GM12878 (cell line): ENCODE measurements at regions of chr2 and their contacts with region 1.

Region 1: DNA sequence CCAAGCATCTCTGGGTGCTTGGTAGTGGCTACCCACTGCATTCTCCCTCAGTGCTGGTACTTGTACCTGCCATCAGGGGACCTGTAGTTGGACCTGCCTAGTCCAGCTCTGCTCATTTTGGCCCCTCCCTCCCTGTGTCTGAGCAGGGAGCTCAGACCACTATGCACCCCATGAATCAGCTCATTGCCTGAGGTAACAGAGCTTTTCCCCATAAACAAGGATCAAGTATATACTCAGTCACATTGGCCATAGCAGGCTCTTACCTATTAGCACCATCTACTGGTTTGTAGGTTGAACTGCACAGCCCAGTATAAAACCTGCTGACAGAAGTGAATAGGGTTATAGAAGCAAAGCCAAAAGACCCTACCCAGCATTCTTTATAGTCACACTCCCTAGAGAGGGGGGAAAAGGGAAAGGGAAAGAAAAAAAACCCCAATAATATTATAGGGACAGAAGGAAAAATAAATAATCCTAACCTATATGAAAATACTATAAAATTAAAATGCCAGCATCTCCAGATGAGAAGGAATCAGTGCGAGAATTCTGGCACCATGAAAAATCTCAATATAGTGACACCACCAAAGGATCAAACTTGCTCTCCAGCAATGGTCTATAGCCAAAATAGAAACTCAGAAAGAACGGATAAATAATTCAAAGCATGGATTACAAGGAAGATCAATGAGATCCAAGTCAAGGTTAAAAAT is 6.9 kb upstream of the FLACC1 start:
- DNase-seq: peak; percentile 30
- ATAC-seq: peak; percentile 94
- H3K4me3 ChIP-seq: no peak overlapping the region
- H3K27ac ChIP-seq: no peak overlapping the region
- H3K4me1 ChIP-seq: no peaks in the 10 kb centered on the region
- H3K27me3 ChIP-seq: no peaks in the 10 kb centered on the region
- CTCF ChIP-seq: peak; percentile 83 to 86 (median 86)
- EP300 ChIP-seq: no peak
- POLR2A ChIP-seq: no peak
- RAD21 ChIP-seq: peak; percentile 97

Region 2: GRCh38 chr2:200985799-200986198 is 378.2 kb before region 1 on chr2:
- CTCF ChIA-PET with region 1: no interaction called
- POLR2A ChIA-PET with region 1: no interaction called
- RAD21 ChIA-PET with region 1: no interaction called
- SMC1A ChIA-PET with region 1: no interaction called
- in situ Hi-C with region 1: no loop called
- intact Hi-C with region 1: no loop called
- DNase-seq: no peak
- ATAC-seq: no peak
- H3K4me3 ChIP-seq: no peak overlapping the region
- H3K27ac ChIP-seq: no peak overlapping the region
- H3K4me1 ChIP-seq: no peaks in the 10 kb centered on the region
- H3K27me3 ChIP-seq: no peaks in the 10 kb centered on the region
- CTCF ChIP-seq: no peak
- EP300 ChIP-seq: no peak
- POLR2A ChIP-seq: no peak
- RAD21 ChIP-seq: no peak

Region 3: GRCh38 chr2:201242571-201243277 is 121.3 kb before region 1 on chr2:
- CTCF ChIA-PET with region 1: interaction called, 55 read pairs
- POLR2A ChIA-PET with region 1: no interaction called
- RAD21 ChIA-PET with region 1: interaction called, 43 read pairs
- SMC1A ChIA-PET with region 1: interaction called, 54 read pairs
- in situ Hi-C with region 1: loop called (anchors 5 kb)
- intact Hi-C with region 1: no loop called
- DNase-seq: no peak
- ATAC-seq: no peak
- H3K4me3 ChIP-seq: no peak overlapping the region
- H3K27ac ChIP-seq: no peak overlapping the region
- H3K4me1 ChIP-seq: no peaks in the 10 kb centered on the region
- H3K27me3 ChIP-seq: no peaks in the 10 kb centered on the region
- CTCF ChIP-seq: no peak
- EP300 ChIP-seq: no peak
- POLR2A ChIP-seq: no peak
- RAD21 ChIP-seq: no peak

Region 4: DNA sequence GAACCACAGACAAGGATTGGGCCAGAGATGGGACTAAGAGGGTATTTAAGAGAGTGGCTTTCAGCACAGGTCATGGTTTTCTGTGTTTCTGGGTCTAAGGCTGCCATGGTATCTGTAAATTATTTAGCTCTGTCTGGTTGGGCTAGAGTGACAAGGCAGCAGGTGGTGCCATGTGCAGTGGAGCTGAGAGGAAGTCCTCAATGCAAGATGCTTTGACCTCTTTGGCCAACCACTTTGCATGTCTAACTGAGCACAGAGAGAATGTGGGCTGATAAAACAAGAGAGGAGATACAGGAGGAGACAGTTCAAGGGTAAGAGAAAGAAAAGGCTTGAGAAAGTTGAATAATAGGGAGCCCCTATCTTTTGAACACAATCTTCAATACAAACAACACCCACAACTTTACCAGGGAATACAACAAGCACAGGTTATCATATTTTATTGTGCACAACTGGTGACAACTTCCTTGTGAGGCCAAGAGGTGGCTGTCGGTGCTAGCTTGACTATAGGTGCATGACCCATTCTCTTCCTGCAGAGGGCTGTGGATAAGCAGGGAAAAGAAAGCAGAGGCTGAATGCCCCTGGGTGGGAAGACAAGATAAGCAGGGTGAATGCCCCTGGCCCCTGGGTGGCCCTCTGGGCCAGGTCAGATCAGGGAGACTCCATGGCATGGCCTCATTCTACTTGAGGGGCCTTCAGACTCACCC is 19.2 kb before region 1 on chr2:
- CTCF ChIA-PET with region 1: interaction called, 20 read pairs
- POLR2A ChIA-PET with region 1: no interaction called
- RAD21 ChIA-PET with region 1: interaction called, 5 read pairs
- SMC1A ChIA-PET with region 1: interaction called, 5 read pairs
- in situ Hi-C with region 1: no loop called
- intact Hi-C with region 1: no loop called
- DNase-seq: peak; percentile 16
- ATAC-seq: peak; percentile 85
- H3K4me3 ChIP-seq: no peak overlapping the region
- H3K27ac ChIP-seq: no peak overlapping the region
- H3K4me1 ChIP-seq: no peaks in the 10 kb centered on the region
- H3K27me3 ChIP-seq: no peaks in the 10 kb centered on the region
- CTCF ChIP-seq: peak; percentile 18 to 37 (median 18); a peak in 4 of 6 replicates
- EP300 ChIP-seq: no peak
- POLR2A ChIP-seq: no peak
- RAD21 ChIP-seq: peak; percentile 47

Region 5: GRCh38 chr2:201759567-201759966 is 395.6 kb after region 1 on chr2:
- CTCF ChIA-PET with region 1: no interaction called
- POLR2A ChIA-PET with region 1: no interaction called
- RAD21 ChIA-PET with region 1: no interaction called
- SMC1A ChIA-PET with region 1: no interaction called
- in situ Hi-C with region 1: no loop called
- intact Hi-C with region 1: no loop called
- DNase-seq: no peak
- ATAC-seq: peak; percentile 39
- H3K4me3 ChIP-seq: no peak overlapping the region
- H3K27ac ChIP-seq: peak overlapping the region; percentile 42; the same call in 1 of the 2 replicates
- H3K4me1 ChIP-seq: no peaks in the 10 kb centered on the region
- H3K27me3 ChIP-seq: no peaks in the 10 kb centered on the region
- CTCF ChIP-seq: no peak
- EP300 ChIP-seq: no peak
- POLR2A ChIP-seq: no peak
- RAD21 ChIP-seq: no peak